ENCODE measurements at regions of chr5 and their contacts with region 1.

Region 1: GRCh38 chr5:82225525-82226172 is 52.5 kb downstream of the RPS23 start:
- DNase-seq: peak; percentile 81
- H3K4me3 ChIP-seq: no peak overlapping the region
- H3K27ac ChIP-seq: no peak overlapping the region
- H3K4me1 ChIP-seq: no peaks in the 10 kb centered on the region
- H3K27me3 ChIP-seq: no peaks in the 10 kb centered on the region
- CTCF ChIP-seq: peak; percentile 93

Region 2: DNA sequence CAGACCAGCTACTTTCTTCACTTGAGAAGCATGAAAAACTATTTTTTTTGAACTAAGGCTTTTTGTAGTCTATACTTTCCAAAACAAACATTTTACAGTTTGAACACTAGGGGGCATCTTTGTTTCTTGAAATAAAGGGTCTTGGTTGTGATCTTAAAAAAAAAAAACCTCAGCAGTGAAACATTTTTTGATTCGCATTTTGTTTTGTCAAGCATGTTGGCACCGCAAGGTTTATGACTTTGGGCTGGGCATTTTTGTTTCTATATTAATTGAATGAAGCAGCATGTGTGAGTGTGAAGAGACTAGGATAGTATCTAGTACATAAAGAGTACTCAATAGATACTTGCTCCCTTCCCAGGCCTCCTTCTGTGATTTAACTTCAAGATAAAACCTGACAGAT is 800.1 kb before region 1 on chr5:
- CTCF ChIA-PET with region 1: no interaction called
- POLR2A ChIA-PET with region 1: no interaction called
- intact Hi-C with region 1: loop called (anchors 2 kb)
- DNase-seq: peak; percentile 76
- H3K4me3 ChIP-seq: no peak overlapping the region
- H3K27ac ChIP-seq: no peak overlapping the region
- H3K4me1 ChIP-seq: peaks cover 14% of the 10 kb centered on the region
- H3K27me3 ChIP-seq: no peaks in the 10 kb centered on the region
- CTCF ChIP-seq: peak; percentile 69

Region 3: GRCh38 chr5:81506900-81507588 is 718.6 kb before region 1 on chr5:
- CTCF ChIA-PET with region 1: no interaction called
- POLR2A ChIA-PET with region 1: no interaction called
- intact Hi-C with region 1: loop called (anchors 5 kb)
- DNase-seq: peak; percentile 89
- H3K4me3 ChIP-seq: no peak overlapping the region
- H3K27ac ChIP-seq: no peak overlapping the region
- H3K4me1 ChIP-seq: peaks cover 23% of the 10 kb centered on the region
- H3K27me3 ChIP-seq: no peaks in the 10 kb centered on the region
- CTCF ChIP-seq: peak; percentile 88

Region 4: DNA sequence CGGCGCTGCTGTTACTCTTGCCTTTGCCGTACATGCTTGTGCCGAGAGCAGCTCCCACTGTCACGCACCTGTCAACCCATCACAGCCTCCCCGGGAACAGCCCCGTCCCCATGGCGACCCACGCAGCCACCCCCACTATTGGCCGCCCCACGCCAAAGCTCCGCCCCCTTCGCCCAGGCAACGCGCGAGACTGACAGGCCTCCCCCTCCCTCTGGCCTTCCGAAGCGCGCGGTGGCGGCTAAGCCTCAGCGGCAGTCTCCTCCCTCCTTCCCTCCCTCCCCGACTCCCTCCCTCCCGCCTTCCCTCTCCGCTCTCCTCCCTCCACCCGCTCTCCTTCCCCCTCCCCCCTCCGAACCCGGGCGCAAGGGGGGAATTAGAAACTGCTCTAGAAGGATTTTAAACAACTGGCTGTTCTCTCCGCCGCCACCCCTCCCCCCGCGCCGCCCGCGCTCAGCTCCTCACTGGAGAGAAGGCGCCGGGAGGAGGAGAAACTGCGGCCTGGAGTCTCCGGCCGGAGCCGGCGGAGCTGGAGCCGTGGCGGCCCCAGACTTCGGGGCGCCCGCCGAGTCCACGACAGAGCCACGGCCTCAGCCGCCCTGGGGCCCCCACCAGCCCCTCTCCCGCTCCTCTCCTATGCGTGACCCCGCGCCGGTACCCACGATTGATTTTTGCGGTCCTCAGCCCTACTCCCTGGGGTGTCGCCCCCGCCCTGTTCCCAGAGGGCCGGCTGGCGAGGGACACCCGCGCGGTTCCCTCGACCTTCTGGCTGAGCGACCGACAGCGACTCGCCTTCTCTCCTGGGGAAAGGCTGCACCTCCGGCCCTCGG is 474.4 kb before region 1 on chr5 and contains the start of gene SSBP2:
- CTCF ChIA-PET with region 1: no interaction called
- POLR2A ChIA-PET with region 1: no interaction called
- intact Hi-C with region 1: loop called (anchors 10 kb)
- DNase-seq: peak; percentile 99
- H3K4me3 ChIP-seq: peak within 1 kb of the TSS; percentile 82
- H3K27ac ChIP-seq: peak within 1 kb of the TSS; percentile 95
- H3K4me1 ChIP-seq: peaks cover 71% of the 10 kb centered on the region
- H3K27me3 ChIP-seq: no peaks in the 10 kb centered on the region
- CTCF ChIP-seq: no peak
- total RNA-seq, gene SSBP2: 42.8 and 53.7 TPM in 2 replicates

Region 5: DNA sequence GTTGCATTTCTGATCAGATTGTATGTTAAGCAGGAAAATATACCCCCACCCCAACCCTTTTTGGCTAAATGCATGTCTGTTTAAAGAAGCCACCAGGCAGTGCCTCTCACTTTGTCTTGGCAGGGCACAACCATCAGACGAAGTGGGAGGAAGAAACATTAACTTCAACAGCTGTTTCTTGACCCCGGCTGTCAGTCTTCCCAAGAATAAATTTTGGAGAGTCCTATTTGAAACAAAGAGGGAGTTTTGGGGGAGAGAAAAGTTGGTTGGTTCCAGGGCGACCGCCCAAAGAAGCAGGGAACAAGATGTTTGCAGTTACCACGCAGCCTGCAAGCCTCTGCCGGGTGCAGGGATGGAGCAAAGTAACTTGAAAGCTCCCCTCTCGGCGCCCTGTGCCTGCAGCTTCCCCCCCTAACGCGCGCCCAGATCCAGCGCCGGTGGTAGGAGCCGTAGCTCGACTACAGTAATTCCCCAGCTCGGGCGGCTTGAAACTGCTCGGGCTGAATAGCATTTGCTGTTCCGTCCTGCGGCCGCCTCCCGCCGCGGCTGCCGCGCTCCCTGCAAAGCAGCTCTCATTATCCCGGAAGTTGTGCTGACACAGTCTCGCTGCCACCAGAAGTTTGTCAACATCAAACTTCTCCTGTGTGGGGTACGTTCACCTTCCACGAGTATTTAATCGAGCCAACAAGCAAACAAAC is 374.0 kb before region 1 on chr5:
- CTCF ChIA-PET with region 1: no interaction called
- POLR2A ChIA-PET with region 1: no interaction called
- intact Hi-C with region 1: loop called (anchors 5 kb)
- DNase-seq: peak; percentile 98
- H3K4me3 ChIP-seq: peak overlapping the region; percentile 37
- H3K27ac ChIP-seq: peak overlapping the region; percentile 98
- H3K4me1 ChIP-seq: peaks cover 71% of the 10 kb centered on the region
- H3K27me3 ChIP-seq: no peaks in the 10 kb centered on the region
- CTCF ChIP-seq: no peak

Region 6: DNA sequence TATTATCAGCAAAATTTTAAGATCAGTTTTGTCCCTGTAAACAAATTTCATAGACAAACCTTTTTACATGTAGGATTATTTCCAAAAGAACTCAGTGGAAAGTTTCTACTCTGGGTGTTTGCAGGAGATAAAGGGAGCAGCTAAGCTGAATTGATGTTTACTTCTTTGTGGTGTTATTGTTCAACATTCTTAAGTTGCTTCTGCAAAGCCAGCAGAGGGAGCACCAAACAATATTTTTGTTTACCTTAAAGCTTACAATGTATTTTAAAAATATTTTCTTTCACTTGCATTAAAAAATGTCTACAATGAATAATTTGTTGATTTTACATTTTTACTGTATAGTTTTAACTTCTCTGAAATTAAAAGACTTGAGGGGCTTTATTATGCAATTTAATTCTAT is 118.4 kb before region 1 on chr5:
- CTCF ChIA-PET with region 1: no interaction called
- POLR2A ChIA-PET with region 1: no interaction called
- intact Hi-C with region 1: loop called (anchors 10 kb)
- DNase-seq: peak; percentile 34
- H3K4me3 ChIP-seq: no peak overlapping the region
- H3K27ac ChIP-seq: no peak overlapping the region
- H3K4me1 ChIP-seq: peaks cover 31% of the 10 kb centered on the region
- H3K27me3 ChIP-seq: no peaks in the 10 kb centered on the region
- CTCF ChIP-seq: peak; percentile 62

Region 7: GRCh38 chr5:82174128-82174918 is 51.3 kb before region 1 on chr5:
- CTCF ChIA-PET with region 1: no interaction called
- POLR2A ChIA-PET with region 1: no interaction called
- intact Hi-C with region 1: loop called (anchors 1 kb)
- DNase-seq: peak; percentile 79
- H3K4me3 ChIP-seq: no peak overlapping the region
- H3K27ac ChIP-seq: no peak overlapping the region
- H3K4me1 ChIP-seq: no peaks in the 10 kb centered on the region
- H3K27me3 ChIP-seq: no peaks in the 10 kb centered on the region
- CTCF ChIP-seq: peak; percentile 93